T-cell (primary cell): ENCODE measurements at regions of chr1 and their contacts with region 1.

Region 1: GRCh38 chr1:37486680-37487618 is 12.6 kb downstream of the ZC3H12A start:
- DNase-seq: peak; percentile 31 to 89 (median 71)
- ATAC-seq: peak; percentile 56 to 84 (median 71)
- H3K4me3 ChIP-seq: no peak overlapping the region
- H3K4me3 Mint-ChIP-seq: peak overlapping the region in 1 of 3 donors; percentile 15
- H3K27ac ChIP-seq: peak overlapping the region; percentile 36
- H3K27ac Mint-ChIP-seq: peak overlapping the region; percentile 84 to 86
- H3K4me1 ChIP-seq: peaks cover 5 to 13% of the 10 kb centered on the region in 2 experiments
- H3K4me1 Mint-ChIP-seq: peaks cover 18 to 28% (median 18%) of the 10 kb centered on the region in 3 donors
- H3K27me3 ChIP-seq: no peaks in the 10 kb centered on the region
- H3K27me3 Mint-ChIP-seq: no peaks in the 10 kb centered on the region

Region 2: GRCh38 chr1:37458528-37458927 is 28.4 kb before region 1 on chr1:
- CTCF ChIA-PET with region 1: interaction called, 32 to 35 read pairs
- POLR2A ChIA-PET with region 1: interaction called in 1 of 2 experiments, 8 read pairs
- DNase-seq: peak in 1 of 35 experiments; percentile 35
- ATAC-seq: peak in 2 of 4 experiments; percentile 34 to 56
- H3K4me3 ChIP-seq: no peak overlapping the region
- H3K4me3 Mint-ChIP-seq: no peak overlapping the region
- H3K27ac ChIP-seq: no peak overlapping the region
- H3K27ac Mint-ChIP-seq: no peak overlapping the region
- H3K4me1 ChIP-seq: peaks cover 0 to 8% of the 10 kb centered on the region in 2 experiments
- H3K4me1 Mint-ChIP-seq: peaks cover 8 to 10% (median 8%) of the 10 kb centered on the region in 3 donors
- H3K27me3 ChIP-seq: no peaks in the 10 kb centered on the region
- H3K27me3 Mint-ChIP-seq: no peaks in the 10 kb centered on the region

Region 3: GRCh38 chr1:37465593-37466517 is 21.1 kb before region 1 on chr1:
- CTCF ChIA-PET with region 1: interaction called, 5 to 11 read pairs
- POLR2A ChIA-PET with region 1: interaction called in 1 of 2 experiments, 3 read pairs
- DNase-seq: no peak
- ATAC-seq: no peak
- H3K4me3 ChIP-seq: no peak overlapping the region
- H3K4me3 Mint-ChIP-seq: no peak overlapping the region
- H3K27ac ChIP-seq: no peak overlapping the region
- H3K27ac Mint-ChIP-seq: no peak overlapping the region
- H3K4me1 ChIP-seq: no peaks in the 10 kb centered on the region
- H3K4me1 Mint-ChIP-seq: peaks cover 8 to 12% (median 11%) of the 10 kb centered on the region in 3 donors
- H3K27me3 ChIP-seq: no peaks in the 10 kb centered on the region
- H3K27me3 Mint-ChIP-seq: no peaks in the 10 kb centered on the region

Region 4: GRCh38 chr1:37498872-37499617 is 12.1 kb after region 1 on chr1:
- CTCF ChIA-PET with region 1: interaction called, 3 to 11 read pairs
- POLR2A ChIA-PET with region 1: no interaction called
- DNase-seq: no peak
- ATAC-seq: no peak
- H3K4me3 ChIP-seq: no peak overlapping the region
- H3K4me3 Mint-ChIP-seq: no peak overlapping the region
- H3K27ac ChIP-seq: no peak overlapping the region
- H3K27ac Mint-ChIP-seq: peak overlapping the region in 1 of 2 donors; percentile 45
- H3K4me1 ChIP-seq: no peaks in the 10 kb centered on the region
- H3K4me1 Mint-ChIP-seq: peaks cover 5 to 18% (median 14%) of the 10 kb centered on the region in 3 donors
- H3K27me3 ChIP-seq: no peaks in the 10 kb centered on the region
- H3K27me3 Mint-ChIP-seq: no peaks in the 10 kb centered on the region

Region 5: GRCh38 chr1:37514350-37515184 is 27.6 kb after region 1 on chr1 and contains the start of gene MEAF6:
- CTCF ChIA-PET with region 1: interaction called in 1 of 2 experiments, 13 read pairs
- POLR2A ChIA-PET with region 1: no interaction called
- DNase-seq: peak; percentile 65 to 92 (median 79)
- ATAC-seq: peak; percentile 94 to 97 (median 96)
- H3K4me3 ChIP-seq: peak within 1 kb of the TSS; percentile 85 to 88
- H3K4me3 Mint-ChIP-seq: peak within 1 kb of the TSS; percentile 89 to 96 (median 94)
- H3K27ac ChIP-seq: peak within 1 kb of the TSS; percentile 89
- H3K27ac Mint-ChIP-seq: peak within 1 kb of the TSS; percentile 98 to 99
- H3K4me1 ChIP-seq: peaks cover 14 to 17% of the 10 kb centered on the region in 2 experiments
- H3K4me1 Mint-ChIP-seq: peaks cover 46 to 49% (median 47%) of the 10 kb centered on the region in 3 donors
- H3K27me3 ChIP-seq: no peaks in the 10 kb centered on the region
- H3K27me3 Mint-ChIP-seq: no peaks in the 10 kb centered on the region
- total RNA-seq, gene MEAF6: 54.0 to 86.3 (median 84.9) TPM